ENCODE measurements at regions of chr10 and their contacts with region 1.

Region 1: GRCh38 chr10:29998142-29998808 is 61.1 kb downstream of the JCAD start:
- DNase-seq: peak; percentile 85
- ATAC-seq: peak; percentile 84
- H3K4me3 Mint-ChIP-seq: no peak overlapping the region
- H3K27ac Mint-ChIP-seq: no peak overlapping the region
- H3K4me1 Mint-ChIP-seq: peaks cover 12% of the 10 kb centered on the region
- H3K27me3 Mint-ChIP-seq: peaks cover 32% of the 10 kb centered on the region

Region 2: DNA sequence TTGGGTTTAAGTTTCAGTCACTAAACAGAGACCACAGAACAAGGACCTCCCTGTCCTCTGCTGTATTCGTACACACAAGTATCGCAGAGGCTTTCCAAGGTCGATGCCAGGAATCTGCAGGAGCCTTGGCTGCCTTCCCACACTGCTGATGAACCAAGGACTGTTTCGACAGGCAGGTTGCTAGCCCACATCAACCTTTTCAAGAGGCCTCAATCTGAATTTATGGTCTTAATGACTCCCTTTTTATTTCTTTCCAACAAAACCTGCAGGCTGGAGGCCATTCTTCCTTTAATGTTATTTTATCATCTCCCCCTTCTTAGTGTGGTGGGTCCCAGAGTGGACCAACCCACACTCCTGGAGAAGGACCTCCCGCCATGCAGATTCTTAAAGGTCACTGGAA is 15.5 kb after region 1 on chr10:
- CTCF ChIA-PET with region 1: interaction called, 19 read pairs
- POLR2A ChIA-PET with region 1: no interaction called
- DNase-seq: no peak
- ATAC-seq: no peak
- H3K4me3 Mint-ChIP-seq: no peak overlapping the region
- H3K27ac Mint-ChIP-seq: no peak overlapping the region
- H3K4me1 Mint-ChIP-seq: no peaks in the 10 kb centered on the region
- H3K27me3 Mint-ChIP-seq: peaks cover 33% of the 10 kb centered on the region

Region 3: GRCh38 chr10:30027057-30028005 is 29.1 kb after region 1 on chr10:
- CTCF ChIA-PET with region 1: interaction called, 13 read pairs
- POLR2A ChIA-PET with region 1: no interaction called
- DNase-seq: peak; percentile 96
- ATAC-seq: peak; percentile 96
- H3K4me3 Mint-ChIP-seq: peak overlapping the region; percentile 65
- H3K27ac Mint-ChIP-seq: peak overlapping the region; percentile 92
- H3K4me1 Mint-ChIP-seq: peaks cover 47% of the 10 kb centered on the region
- H3K27me3 Mint-ChIP-seq: peaks cover 38% of the 10 kb centered on the region

Region 4: DNA sequence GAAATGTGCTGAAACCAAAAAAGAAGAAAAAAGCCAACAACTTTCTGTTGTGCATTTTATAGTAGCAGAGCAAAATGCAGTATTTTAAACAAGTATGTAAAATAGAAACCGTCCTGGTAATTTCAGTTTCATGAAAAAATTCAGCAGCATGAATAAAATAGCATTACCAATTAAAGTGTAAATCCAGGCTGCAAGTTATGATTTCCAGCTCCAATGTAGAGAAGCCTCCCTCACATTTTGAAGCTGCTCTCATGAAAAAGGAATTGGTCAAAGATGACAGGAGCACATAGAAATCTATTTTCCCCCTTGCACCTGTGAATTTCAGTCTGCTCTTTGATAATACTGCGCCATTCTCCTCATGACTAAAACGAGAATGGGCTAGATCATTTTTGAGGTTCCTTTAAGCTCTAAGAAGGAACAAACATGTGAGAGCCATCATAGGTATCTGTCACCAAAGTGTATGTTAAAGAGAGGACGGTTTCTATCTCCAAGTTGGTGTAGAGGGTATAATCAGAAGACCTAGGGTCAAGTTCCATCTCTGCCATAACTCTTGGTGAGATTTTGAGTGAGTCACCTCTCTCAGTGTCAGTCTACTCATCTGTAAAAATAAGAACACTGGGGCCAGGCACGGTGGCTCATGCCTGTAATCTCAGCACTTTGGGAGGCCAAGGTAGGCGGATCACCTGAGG is 243.3 kb after region 1 on chr10:
- CTCF ChIA-PET with region 1: interaction called, 17 read pairs
- POLR2A ChIA-PET with region 1: no interaction called
- DNase-seq: no peak
- ATAC-seq: no peak
- H3K4me3 Mint-ChIP-seq: no peak overlapping the region
- H3K27ac Mint-ChIP-seq: no peak overlapping the region
- H3K4me1 Mint-ChIP-seq: peaks cover 5% of the 10 kb centered on the region
- H3K27me3 Mint-ChIP-seq: peaks cover 2% of the 10 kb centered on the region

Region 5: DNA sequence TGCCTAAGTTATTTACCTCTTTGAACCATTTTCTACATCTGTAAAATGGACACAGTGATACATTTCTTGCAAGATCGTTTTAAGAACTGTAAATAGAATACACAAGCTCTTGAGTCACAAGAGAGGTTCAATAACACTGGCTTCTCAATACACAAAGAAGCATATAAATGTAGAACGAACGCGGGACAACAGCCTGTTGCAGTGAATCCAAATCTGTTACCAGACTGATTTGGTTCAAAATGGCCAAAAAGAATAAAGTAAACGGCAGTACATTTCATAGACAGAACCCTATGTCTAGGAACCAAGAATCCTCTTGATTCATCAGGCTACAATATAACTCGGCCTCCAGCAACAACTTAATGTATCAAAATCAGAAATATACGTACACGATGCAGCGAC is 350.1 kb after region 1 on chr10:
- CTCF ChIA-PET with region 1: interaction called, 12 read pairs
- POLR2A ChIA-PET with region 1: no interaction called
- DNase-seq: no peak
- ATAC-seq: no peak
- H3K4me3 Mint-ChIP-seq: peak overlapping the region; percentile 87
- H3K27ac Mint-ChIP-seq: peak overlapping the region; percentile 90
- H3K4me1 Mint-ChIP-seq: peaks cover 27% of the 10 kb centered on the region
- H3K27me3 Mint-ChIP-seq: peaks cover 1% of the 10 kb centered on the region

Region 6: DNA sequence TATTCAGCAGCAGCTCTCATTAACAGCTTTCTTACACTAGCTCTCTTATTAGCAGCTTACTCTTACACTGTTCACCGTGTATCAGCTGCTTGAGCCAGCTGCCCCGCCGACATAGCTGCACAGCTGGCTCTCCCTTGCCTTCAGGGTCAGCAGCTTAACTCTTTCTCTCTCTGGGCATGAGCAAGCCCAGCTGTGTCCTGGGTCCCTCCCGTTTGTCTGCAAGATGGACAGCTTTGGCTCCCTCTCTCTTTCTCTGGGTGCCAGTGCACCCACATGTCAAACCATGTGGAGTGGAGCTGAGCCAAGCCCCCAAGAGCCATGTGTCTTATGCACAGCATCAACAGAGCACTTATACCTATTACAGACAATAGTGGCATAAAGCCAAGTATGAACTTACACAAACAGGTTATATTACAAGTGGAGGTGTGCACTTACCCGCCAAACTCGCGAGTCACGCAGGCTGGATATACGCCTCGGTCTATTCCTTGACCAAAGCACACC is 386.5 kb after region 1 on chr10:
- CTCF ChIA-PET with region 1: interaction called, 14 read pairs
- POLR2A ChIA-PET with region 1: no interaction called
- DNase-seq: peak; percentile 37
- ATAC-seq: no peak
- H3K4me3 Mint-ChIP-seq: no peak overlapping the region
- H3K27ac Mint-ChIP-seq: no peak overlapping the region
- H3K4me1 Mint-ChIP-seq: no peaks in the 10 kb centered on the region
- H3K27me3 Mint-ChIP-seq: peaks cover 26% of the 10 kb centered on the region

Measured in activated CD8-positive, alpha-beta T cell treated with anti-CD3 and anti-CD28 coated beads, Interleukin-2, amount 10 ng/mL, durations not matched to agents 7 days and 5 days (primary cell).